ENCODE measurements at regions of chr2 and their contacts with region 1.

Region 1: GRCh38 chr2:160429248-160430000 is 64.2 kb downstream of the RBMS1 start:
- DNase-seq: peak in 2 of 5 donors; percentile 49 to 58
- H3K4me3 ChIP-seq: no peak overlapping the region
- H3K4me3 Mint-ChIP-seq: peak overlapping the region in 5 of 7 donors; percentile 7 to 63 (median 38)
- H3K27ac ChIP-seq: no peak overlapping the region
- H3K27ac Mint-ChIP-seq: peak overlapping the region; percentile 75 to 96 (median 88)
- H3K4me1 ChIP-seq: peaks cover 45% of the 10 kb centered on the region
- H3K4me1 Mint-ChIP-seq: peaks cover 52 to 86% (median 76%) of the 10 kb centered on the region in 3 donors
- H3K27me3 ChIP-seq: no peaks in the 10 kb centered on the region
- H3K27me3 Mint-ChIP-seq: no peaks in the 10 kb centered on the region

Region 2: DNA sequence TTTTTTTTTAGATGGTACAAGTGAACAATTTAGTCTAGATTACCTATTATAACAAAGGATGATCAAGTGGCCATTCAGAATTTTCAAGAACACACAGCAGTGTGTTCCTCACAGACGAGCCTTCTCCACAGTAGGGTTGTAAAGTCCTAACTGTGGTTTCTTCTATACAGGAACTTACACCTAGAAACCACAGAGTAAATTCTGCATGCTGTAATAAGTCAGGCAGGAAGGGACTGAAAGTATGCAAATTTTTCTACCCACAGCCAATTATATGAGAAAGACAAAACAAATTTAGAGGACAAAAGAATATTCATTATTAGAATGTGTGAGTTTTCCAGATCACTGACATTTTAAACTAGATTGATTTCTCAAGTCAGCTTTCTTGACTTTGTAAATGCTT is 35.3 kb before region 1 on chr2:
- CTCF ChIA-PET with region 1: interaction called, 11 read pairs
- POLR2A ChIA-PET with region 1: interaction called, 5 read pairs
- DNase-seq: peak in 2 of 5 donors; percentile 43 to 64
- H3K4me3 ChIP-seq: no peak overlapping the region
- H3K4me3 Mint-ChIP-seq: peak overlapping the region; percentile 39 to 81 (median 70)
- H3K27ac ChIP-seq: no peak overlapping the region
- H3K27ac Mint-ChIP-seq: peak overlapping the region; percentile 55 to 92 (median 86)
- H3K4me1 ChIP-seq: peaks cover 86% of the 10 kb centered on the region
- H3K4me1 Mint-ChIP-seq: peaks cover 60 to 70% (median 65%) of the 10 kb centered on the region in 3 donors
- H3K27me3 ChIP-seq: no peaks in the 10 kb centered on the region
- H3K27me3 Mint-ChIP-seq: peaks cover 0 to 2% of the 10 kb centered on the region in 2 donors

Region 3: DNA sequence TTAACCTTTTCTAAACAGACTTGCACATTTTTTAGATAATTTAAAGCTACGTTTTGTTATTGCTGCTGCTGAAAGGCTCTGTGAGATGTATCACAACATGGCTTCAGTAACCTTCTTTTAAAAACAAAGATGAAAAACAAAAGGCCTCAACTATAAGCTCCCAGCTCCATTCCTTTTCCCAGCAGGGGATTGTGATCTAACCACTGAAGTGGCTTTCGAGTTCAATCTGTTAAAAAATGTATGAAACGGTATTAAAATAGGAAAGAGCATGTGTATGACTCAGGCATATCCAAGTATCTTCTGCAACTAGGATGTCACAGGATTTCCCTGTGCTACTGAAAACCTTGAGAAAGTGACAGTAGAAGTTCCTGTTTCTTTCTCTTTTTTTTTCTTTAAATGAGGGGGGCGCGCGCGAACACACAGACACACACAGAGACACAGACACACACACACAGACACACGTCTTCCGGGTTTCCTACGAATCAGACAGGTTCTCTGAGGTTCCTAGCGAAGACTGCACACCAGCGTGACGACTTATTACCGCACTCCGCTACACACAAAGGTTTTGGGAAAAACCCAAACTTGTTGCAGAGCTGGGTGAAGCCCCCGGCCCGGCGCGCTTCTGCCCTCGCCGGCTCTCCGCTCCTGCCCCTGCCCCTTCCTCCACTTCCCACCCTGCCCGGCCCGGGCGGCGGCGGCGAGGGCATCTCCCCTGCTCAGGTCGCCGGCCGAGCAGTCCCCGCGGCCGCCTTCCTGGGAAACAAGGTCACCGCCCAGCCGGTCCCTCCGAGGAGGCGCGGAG is 22.6 kb before region 1 on chr2:
- CTCF ChIA-PET with region 1: interaction called, 25 read pairs
- POLR2A ChIA-PET with region 1: interaction called, 20 read pairs
- DNase-seq: peak; percentile 65 to 90 (median 84)
- H3K4me3 ChIP-seq: peak overlapping the region; percentile 86
- H3K4me3 Mint-ChIP-seq: peak overlapping the region; percentile 89 to 97 (median 93)
- H3K27ac ChIP-seq: peak overlapping the region; percentile 75
- H3K27ac Mint-ChIP-seq: peak overlapping the region; percentile 90 to 99 (median 94)
- H3K4me1 ChIP-seq: peaks cover 77% of the 10 kb centered on the region
- H3K4me1 Mint-ChIP-seq: peaks cover 79 to 90% (median 87%) of the 10 kb centered on the region in 3 donors
- H3K27me3 ChIP-seq: no peaks in the 10 kb centered on the region
- H3K27me3 Mint-ChIP-seq: no peaks in the 10 kb centered on the region

Region 4: GRCh38 chr2:160561551-160562295 is 132.3 kb after region 1 on chr2:
- CTCF ChIA-PET with region 1: no interaction called
- POLR2A ChIA-PET with region 1: no interaction called
- DNase-seq: no peak
- H3K4me3 ChIP-seq: no peak overlapping the region
- H3K4me3 Mint-ChIP-seq: no peak overlapping the region
- H3K27ac ChIP-seq: no peak overlapping the region
- H3K27ac Mint-ChIP-seq: no peak overlapping the region
- H3K4me1 ChIP-seq: no peaks in the 10 kb centered on the region
- H3K4me1 Mint-ChIP-seq: peaks cover 0 to 18% (median 8%) of the 10 kb centered on the region in 3 donors
- H3K27me3 ChIP-seq: no peaks in the 10 kb centered on the region
- H3K27me3 Mint-ChIP-seq: peaks cover 1 to 3% of the 10 kb centered on the region in 2 donors

Measured in CD8-positive, alpha-beta memory T cell (primary cell).